ENCODE measurements at regions of chr15 and their contacts with region 1.

Region 1: GRCh38 chr15:65275728-65276126 is 11.0 kb downstream of the PARP16 start:
- DNase-seq: no peak

Region 2: DNA sequence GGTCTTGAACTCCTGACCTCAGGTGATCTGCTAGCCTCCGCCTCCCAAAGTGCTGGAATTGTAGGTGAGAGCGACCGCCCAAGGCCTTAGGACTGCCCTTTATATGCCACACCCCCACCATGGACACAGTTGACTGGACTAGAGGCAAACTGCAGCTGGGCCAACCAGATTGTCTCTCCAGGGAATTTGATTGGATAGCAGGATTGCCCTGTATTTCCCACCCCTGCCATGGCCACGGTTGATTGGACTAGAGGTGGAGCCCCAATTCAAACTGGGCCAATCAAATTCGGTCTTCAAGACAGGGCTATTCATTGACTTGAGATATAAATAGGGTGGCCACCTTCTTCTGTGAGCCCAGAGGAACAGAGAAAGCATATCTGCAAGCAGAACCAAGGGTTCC is 83.7 kb before region 1 on chr15:
- intact Hi-C with region 1: loop called (anchors 10 kb)
- DNase-seq: peak in 2 of 42 donors; percentile 10 to 23

Measured in head of caudate nucleus (tissue), 42 donors.